Left colon (tissue), 2 donors: ENCODE measurements at regions of chr1 and their contacts with region 1.

Region 1: GRCh38 chr1:204806943-204807687 is 63.5 kb upstream of the NFASC start:
- DNase-seq: peak; percentile 74 to 87
- ATAC-seq: peak; percentile 86

Region 2: DNA sequence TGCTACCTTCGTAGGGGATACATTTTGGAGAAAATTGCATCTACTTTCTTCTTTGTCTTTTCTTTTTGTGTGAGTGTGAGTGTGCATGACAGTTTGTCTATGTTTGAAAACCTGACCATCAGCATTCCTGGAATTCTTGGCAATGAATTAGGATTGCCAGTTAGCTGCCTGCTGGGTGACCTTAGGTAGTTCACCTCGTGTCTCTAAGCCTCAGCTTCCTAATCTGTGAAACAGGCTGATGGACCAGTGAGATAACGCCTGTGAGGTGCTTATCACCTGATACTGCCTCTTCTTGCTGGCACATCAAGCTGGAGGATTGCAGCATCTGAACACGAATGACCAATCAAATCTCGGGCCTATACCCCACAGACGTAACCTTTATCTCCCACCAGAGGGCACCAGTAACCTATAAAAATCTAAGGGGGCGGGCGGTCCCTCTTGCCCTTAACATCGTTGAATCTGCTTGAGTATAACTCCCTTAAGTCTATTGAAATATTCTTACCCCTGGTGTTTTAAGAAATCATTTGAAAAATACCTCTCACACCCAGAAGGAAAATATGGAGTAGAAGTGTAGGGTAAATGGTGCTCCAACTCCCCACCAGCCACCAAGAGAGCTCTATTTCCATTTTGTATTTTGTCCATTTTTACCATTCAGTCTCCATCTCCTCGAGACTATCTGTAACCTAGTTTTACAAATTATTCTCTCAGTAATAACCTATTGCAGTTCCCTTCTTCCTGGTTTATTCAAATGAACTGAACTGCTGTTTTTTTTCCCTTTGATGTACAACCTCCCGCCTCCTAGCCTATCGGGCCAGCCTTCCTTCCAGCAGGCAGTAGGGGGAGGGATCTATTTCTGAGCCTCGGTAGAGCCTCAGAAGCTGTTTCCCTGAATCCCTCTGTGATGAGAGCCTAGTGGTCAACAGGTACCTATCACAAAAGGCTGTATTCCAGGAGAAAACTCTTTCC is 241.2 kb before region 1 on chr1:
- intact Hi-C with region 1: loop called in 1 of 2 experiments (anchors 5 kb)
- DNase-seq: peak; percentile 37 to 52
- ATAC-seq: peak; percentile 76

Region 3: DNA sequence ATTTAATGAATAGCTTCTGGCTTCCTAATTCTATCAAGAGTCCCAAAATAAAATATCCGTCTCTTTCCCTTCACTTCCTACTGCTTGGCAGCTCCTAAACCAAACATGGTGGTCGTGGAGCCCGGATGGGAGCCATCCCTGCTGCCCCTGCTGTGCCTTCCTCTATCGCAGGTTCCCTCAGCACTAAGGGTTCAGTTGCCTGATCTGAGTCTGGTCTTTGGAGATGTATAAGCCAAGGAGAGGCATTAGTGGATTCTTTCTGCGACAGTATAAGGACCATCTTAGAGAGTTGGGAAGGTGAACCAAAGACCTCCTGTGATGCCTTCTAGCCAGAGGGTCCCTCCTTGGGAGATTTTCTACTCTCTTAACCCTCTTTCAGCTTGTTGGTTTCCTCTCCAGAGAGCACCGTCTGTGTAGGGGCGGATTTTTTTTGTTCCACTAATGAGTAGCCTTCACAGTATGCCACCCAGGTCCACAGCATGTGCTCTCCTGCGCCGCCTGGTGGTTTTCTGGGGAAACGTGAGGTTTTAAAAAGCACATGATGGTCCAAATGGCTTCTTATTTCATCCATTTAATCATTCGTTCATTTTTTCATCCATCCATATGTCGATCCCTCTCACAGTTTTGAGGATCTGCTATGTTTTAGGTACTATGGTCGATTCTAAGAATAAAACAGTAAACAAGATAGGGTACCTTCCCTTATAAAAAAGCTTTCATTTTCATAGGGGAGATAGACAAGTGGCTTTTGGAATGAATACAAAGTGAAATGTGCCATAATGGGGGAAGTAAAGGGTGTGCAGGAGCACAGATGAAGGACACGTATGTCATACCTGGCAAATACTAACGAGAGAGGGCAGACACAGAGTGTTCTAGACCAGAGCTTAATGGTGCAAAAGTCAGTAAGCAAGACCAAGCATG is 134.6 kb after region 1 on chr1:
- intact Hi-C with region 1: loop called in 1 of 2 experiments (anchors 5 kb)
- DNase-seq: peak in 1 of 2 donors; percentile 68
- ATAC-seq: peak; percentile 68